Sciatic nerve (tissue), 2 donors: ENCODE measurements at regions of chr7 and their contacts with region 1.

Region 1: GRCh38 chr7:92833024-92833765 is 3.2 kb downstream of the CDK6 start:
- DNase-seq: peak; percentile 91
- ATAC-seq: peak; percentile 81

Region 2: GRCh38 chr7:92682903-92683539 is 150.2 kb before region 1 on chr7:
- intact Hi-C with region 1: no loop called
- DNase-seq: no peak
- ATAC-seq: no peak

Region 3: DNA sequence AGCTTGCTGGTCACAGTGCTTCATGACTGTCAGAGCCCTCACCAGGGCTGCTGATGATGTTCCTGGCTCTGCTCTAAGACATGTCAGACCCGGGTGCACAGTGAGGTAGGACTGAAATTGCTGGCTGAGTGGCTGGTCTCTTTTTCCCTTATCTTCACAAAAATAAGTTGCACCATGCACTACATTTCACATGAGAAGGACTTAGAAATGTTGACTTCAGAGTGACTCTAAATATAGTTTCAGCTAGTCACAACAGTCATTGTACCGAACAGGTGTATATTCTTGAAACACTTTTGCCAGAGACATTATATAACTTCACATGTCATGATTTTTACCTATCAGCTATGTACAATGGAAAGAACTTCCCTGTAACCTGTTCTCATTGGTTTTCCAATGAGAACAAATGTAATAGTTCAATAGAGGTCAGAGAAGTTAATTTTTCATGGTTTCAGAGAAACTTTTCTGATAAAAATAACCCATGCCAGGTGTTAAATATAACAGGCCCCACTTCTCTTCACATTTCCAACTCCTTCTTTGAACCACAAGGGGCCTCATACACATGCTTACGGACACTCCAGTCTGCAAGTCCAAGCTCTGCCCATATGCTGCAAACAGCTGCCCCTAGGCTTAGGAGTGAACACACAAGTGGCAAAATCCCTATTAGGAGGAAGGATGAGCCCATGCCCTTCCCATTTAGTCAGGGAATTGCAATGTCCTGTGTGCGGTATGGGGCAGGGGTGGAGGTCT is 112.4 kb before region 1 on chr7:
- intact Hi-C with region 1: loop called (anchors 10 kb)
- DNase-seq: no peak
- ATAC-seq: no peak

Region 4: DNA sequence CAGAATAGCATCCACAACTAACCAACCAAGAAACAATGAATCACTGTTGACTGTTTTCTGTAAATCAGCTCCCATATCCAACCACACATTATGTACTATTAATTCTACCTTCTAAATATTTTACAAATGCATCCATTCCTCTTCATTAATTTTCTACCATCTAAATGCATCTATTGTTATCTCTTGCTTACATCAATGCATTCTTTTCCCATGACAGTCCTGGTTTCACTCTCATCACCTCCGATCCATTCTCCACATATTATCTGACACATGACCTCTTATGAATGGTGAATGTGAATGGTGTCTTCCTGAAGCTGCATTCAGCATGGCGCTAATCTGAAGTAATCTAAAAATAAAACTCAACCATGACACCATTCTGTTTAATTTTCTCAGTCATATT is 895.1 kb after region 1 on chr7:
- intact Hi-C with region 1: no loop called
- DNase-seq: no peak
- ATAC-seq: no peak